ENCODE measurements at regions of chr11 and their contacts with region 1.

Region 1: DNA sequence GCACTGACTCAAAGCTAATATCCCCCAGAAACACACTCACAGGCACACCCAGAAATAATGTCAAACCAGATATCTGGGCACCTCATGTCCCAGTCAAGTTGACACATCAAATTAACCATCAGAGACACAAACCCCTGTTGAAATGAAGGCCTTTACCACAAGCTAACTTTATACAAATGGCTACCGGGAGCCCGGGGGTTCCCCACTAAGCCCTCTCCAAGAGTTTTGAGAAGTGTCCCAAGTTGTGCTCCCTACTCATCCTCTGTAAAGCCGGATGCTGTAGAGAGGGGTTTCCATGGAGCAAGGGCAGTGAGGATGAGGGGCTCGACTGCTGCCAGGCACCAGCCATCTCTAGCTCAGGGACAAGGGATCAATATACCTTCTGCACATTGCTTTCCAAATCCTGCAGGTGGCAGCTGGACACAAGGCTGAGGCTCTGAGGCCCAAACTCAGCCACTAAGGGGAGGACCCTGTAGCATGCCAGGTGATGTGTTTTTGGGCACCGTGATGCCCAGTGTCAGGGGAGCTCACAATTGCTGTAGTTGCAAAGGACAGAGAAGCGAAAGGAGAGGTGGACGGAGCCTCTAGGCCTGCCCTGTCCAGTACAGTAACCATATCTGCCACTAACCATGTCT is 145.7 kb downstream of the TTC17 start:
- DNase-seq: peak; percentile 44 to 61 (median 57)
- H3K4me3 ChIP-seq: no peak overlapping the region
- H3K27ac ChIP-seq: no peak overlapping the region
- H3K4me1 ChIP-seq: no peaks in the 10 kb centered on the region
- H3K27me3 ChIP-seq: no peaks in the 10 kb centered on the region
- CTCF ChIP-seq: peak; percentile 29 to 62 (median 41)
- EP300 ChIP-seq: no peak
- POLR2A ChIP-seq: peak; percentile 11

Region 2: DNA sequence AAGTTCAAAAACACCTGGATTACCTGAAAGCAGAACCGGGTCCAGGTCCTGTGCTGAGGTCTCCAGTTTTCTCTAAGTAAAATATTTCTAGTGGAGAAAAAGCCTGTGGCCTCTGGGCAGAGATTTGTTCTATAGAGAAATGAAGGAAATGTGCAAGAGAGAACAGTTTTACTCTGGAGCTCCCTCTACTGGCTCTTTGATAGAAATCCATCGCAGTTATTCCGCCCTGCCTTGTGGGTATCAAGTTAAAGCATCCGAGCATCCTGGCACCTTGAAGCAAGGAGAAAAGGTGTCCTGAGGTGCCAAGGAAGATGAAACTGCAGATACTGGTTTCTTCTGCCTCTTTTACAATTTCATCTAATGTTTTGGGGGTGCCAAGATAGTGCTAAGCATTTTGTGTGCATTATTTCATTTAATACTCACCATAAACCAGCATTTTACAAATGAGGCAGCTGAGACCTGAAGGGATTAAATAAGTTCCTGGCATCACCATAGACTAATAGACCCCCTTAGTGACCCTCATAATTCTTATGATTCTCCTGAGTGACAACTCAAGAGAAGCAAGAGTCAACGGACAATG is 63.1 kb after region 1 on chr11:
- intact Hi-C with region 1: loop called (anchors 2 to 10 kb)
- DNase-seq: no peak
- H3K4me3 ChIP-seq: no peak overlapping the region
- H3K27ac ChIP-seq: no peak overlapping the region
- H3K4me1 ChIP-seq: no peaks in the 10 kb centered on the region
- H3K27me3 ChIP-seq: no peaks in the 10 kb centered on the region
- CTCF ChIP-seq: peak; percentile 46 to 60 (median 57)
- EP300 ChIP-seq: no peak
- POLR2A ChIP-seq: no peak

Region 3: GRCh38 chr11:43802509-43802908 is 298.1 kb after region 1 on chr11:
- intact Hi-C with region 1: loop called in 1 of 4 experiments (anchors 10 kb)
- DNase-seq: no peak
- H3K4me3 ChIP-seq: no peak overlapping the region
- H3K27ac ChIP-seq: no peak overlapping the region
- H3K4me1 ChIP-seq: no peaks in the 10 kb centered on the region
- H3K27me3 ChIP-seq: no peaks in the 10 kb centered on the region
- CTCF ChIP-seq: no peak
- EP300 ChIP-seq: no peak
- POLR2A ChIP-seq: no peak

Region 4: GRCh38 chr11:43810929-43811596 is 306.6 kb after region 1 on chr11:
- intact Hi-C with region 1: loop called in 2 of 4 experiments (anchors 2 to 10 kb)
- DNase-seq: no peak
- H3K4me3 ChIP-seq: no peak overlapping the region
- H3K27ac ChIP-seq: no peak overlapping the region
- H3K4me1 ChIP-seq: no peaks in the 10 kb centered on the region
- H3K27me3 ChIP-seq: no peaks in the 10 kb centered on the region
- CTCF ChIP-seq: peak in 1 of 3 donors; percentile 10
- EP300 ChIP-seq: no peak
- POLR2A ChIP-seq: no peak